ENCODE measurements at regions of chr4 and their contacts with region 1.

Region 1: DNA sequence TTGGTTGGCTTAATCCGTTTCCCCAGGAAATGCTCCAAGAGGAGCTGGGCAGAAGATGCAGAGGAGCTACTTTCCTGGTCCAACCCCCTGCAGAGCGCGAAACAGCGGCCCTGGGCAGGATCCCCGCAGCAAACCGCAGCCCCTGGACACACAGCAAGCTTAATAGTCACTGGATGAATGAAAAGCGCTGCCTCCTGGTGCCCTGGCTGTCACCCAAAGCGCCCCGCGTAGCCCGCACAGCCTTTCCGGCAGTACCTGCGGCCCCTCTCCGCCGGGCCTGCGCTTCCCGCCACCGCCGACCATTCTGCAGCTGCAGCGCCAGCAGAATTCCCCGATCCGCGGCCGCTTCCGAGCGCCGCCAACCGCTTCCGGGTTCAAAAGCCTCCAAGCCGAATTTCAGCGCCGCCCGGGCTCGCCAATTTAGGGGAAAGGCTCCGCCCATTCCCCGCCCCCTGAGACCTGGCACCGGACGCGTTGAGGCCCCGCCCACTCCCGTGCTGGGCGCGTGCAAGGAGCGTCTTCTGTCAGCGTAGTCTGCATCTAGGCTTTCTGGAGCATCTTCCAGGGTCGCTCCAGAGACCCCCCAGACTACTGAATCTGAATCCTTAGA is at the start of gene HPF1:
- DNase-seq: peak; percentile 97
- H3K4me3 Mint-ChIP-seq: peak within 1 kb of the TSS; percentile 83
- H3K27ac Mint-ChIP-seq: peak within 1 kb of the TSS; percentile 70
- H3K4me1 Mint-ChIP-seq: peaks cover 24% of the 10 kb centered on the region
- H3K27me3 Mint-ChIP-seq: no peaks in the 10 kb centered on the region
- total RNA-seq, gene HPF1: 36.6 to 41.1 TPM

Region 2: DNA sequence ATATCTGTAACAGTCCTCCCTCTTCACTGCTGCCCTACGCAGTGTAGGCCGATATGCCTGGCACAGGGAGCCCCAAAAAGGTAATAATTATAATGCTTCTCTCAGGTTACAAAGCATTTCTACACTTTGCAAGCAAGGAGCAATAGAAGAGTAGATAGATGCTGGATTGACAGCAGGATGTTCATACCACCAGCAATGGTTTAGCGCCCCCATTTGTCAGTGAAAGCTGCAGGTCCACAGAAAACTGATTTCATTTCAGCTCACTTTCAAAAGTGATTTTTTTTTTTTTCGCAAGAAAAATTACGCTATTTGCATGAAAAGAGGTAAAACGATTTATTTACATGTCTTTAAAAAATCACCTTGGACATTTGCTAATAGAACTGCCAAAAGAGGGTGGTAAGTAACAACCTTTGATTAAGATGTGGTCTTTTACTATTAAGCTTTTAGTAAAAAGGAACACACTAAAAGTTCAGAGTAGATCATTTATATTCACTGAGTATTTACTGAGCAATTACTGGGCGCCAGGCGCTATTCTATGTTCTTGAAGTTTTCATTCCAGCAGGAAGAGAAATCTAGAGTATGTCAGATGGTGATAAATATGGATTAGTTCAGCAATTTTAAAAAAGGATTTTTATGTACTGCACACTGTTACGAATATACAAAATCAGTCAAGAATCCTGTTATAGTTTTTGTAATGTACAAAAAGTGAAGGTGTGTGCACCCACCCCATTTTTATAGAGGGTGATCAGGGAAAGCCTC is 34.3 kb before region 1 on chr4:
- CTCF ChIA-PET with region 1: no interaction called
- POLR2A ChIA-PET with region 1: no interaction called
- intact Hi-C with region 1: loop called (anchors 5 kb)
- DNase-seq: no peak
- H3K4me3 Mint-ChIP-seq: no peak overlapping the region
- H3K27ac Mint-ChIP-seq: no peak overlapping the region
- H3K4me1 Mint-ChIP-seq: peaks cover 11% of the 10 kb centered on the region
- H3K27me3 Mint-ChIP-seq: no peaks in the 10 kb centered on the region

Region 3: DNA sequence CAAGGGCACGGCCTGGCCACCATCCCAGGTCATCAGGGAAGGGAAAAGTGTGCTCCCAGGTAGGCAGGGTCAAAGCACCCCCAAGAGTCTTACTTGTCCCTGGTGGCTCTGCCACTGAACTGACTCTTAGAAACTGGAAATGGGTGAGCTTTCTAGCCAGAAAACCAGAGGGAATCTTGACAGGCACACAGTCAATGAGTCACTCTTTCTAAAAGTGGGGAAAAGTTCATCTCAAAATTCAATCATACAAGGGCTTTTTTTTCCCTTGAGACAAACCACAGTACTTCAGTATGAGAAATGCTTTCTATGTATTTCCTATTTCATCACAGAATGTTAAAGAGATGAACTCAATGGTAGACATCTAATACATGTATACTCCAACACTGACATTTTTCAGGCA is 12.4 kb before region 1 on chr4:
- CTCF ChIA-PET with region 1: no interaction called
- POLR2A ChIA-PET with region 1: no interaction called
- intact Hi-C with region 1: no loop called
- DNase-seq: no peak
- H3K4me3 Mint-ChIP-seq: no peak overlapping the region
- H3K27ac Mint-ChIP-seq: no peak overlapping the region
- H3K4me1 Mint-ChIP-seq: no peaks in the 10 kb centered on the region
- H3K27me3 Mint-ChIP-seq: no peaks in the 10 kb centered on the region

Region 4: GRCh38 chr4:169791527-169792156 is 34.0 kb after region 1 on chr4:
- CTCF ChIA-PET with region 1: no interaction called
- POLR2A ChIA-PET with region 1: no interaction called
- intact Hi-C with region 1: loop called (anchors 1 kb)
- DNase-seq: peak; percentile 35
- H3K4me3 Mint-ChIP-seq: peak overlapping the region; percentile 3
- H3K27ac Mint-ChIP-seq: no peak overlapping the region
- H3K4me1 Mint-ChIP-seq: peaks cover 16% of the 10 kb centered on the region
- H3K27me3 Mint-ChIP-seq: peaks cover 50% of the 10 kb centered on the region

Region 5: GRCh38 chr4:169912646-169913395 is 155.1 kb after region 1 on chr4:
- CTCF ChIA-PET with region 1: no interaction called
- POLR2A ChIA-PET with region 1: no interaction called
- intact Hi-C with region 1: no loop called
- DNase-seq: no peak
- H3K4me3 Mint-ChIP-seq: no peak overlapping the region
- H3K27ac Mint-ChIP-seq: no peak overlapping the region
- H3K4me1 Mint-ChIP-seq: no peaks in the 10 kb centered on the region
- H3K27me3 Mint-ChIP-seq: peaks cover 4% of the 10 kb centered on the region

Measured in activated CD4-positive, alpha-beta memory T cell treated with anti-CD3 and anti-CD28 coated beads for 36 hours (primary cell).